ENCODE measurements at regions of chr15 and their contacts with region 1.

Region 1: GRCh38 chr15:31442203-31443111 is 115.8 kb downstream of the KLF13 start:
- DNase-seq: no peak
- H3K4me3 ChIP-seq: no peak overlapping the region
- H3K4me3 Mint-ChIP-seq: peak overlapping the region; percentile 63 to 75 (median 69)
- H3K27ac ChIP-seq: no peak overlapping the region
- H3K27ac Mint-ChIP-seq: peak overlapping the region in 5 of 7 donors; percentile 63 to 88 (median 68)
- H3K4me1 ChIP-seq: peaks cover 41% of the 10 kb centered on the region
- H3K4me1 Mint-ChIP-seq: peaks cover 27 to 56% (median 37%) of the 10 kb centered on the region in 4 donors
- H3K27me3 ChIP-seq: no peaks in the 10 kb centered on the region
- H3K27me3 Mint-ChIP-seq: no peaks in the 10 kb centered on the region

Region 2: GRCh38 chr15:31200735-31201151 is 241.7 kb before region 1 on chr15:
- CTCF ChIA-PET with region 1: interaction called, 34 read pairs
- POLR2A ChIA-PET with region 1: no interaction called
- intact Hi-C with region 1: no loop called
- DNase-seq: peak; percentile 70 to 73 (median 71)
- H3K4me3 ChIP-seq: no peak overlapping the region
- H3K4me3 Mint-ChIP-seq: peak overlapping the region in 2 of 8 donors; percentile 20 to 26
- H3K27ac ChIP-seq: no peak overlapping the region
- H3K27ac Mint-ChIP-seq: peak overlapping the region in 4 of 7 donors; percentile 18 to 87 (median 38)
- H3K4me1 ChIP-seq: peaks cover 26% of the 10 kb centered on the region
- H3K4me1 Mint-ChIP-seq: peaks cover 9 to 30% (median 15%) of the 10 kb centered on the region in 4 donors
- H3K27me3 ChIP-seq: no peaks in the 10 kb centered on the region
- H3K27me3 Mint-ChIP-seq: no peaks in the 10 kb centered on the region